AG04450 (cell line): ENCODE measurements at regions of chr3 and their contacts with region 1.

Region 1: DNA sequence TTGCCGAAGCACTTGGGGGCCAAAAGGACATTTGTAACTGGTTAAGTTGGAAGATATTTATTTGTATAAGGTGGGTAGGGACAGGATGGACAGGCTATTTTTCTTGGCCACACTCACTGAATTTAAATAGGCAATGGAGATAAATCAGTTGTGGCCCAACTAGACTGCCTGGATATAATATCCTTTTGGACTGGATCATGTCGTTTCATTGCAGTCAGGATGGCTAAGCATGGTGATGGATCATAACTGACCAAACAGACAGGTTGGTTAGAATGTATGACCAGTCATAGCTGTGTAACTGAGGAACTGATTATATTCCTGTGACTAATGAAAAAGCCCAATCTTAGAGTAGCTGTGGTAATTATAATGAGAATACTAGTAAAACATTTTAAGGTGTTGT is 284.0 kb downstream of the LPP start:
- DNase-seq: no peak
- H3K4me3 ChIP-seq: no peak overlapping the region
- H3K27ac ChIP-seq: no peak overlapping the region
- H3K27me3 ChIP-seq: no peaks in the 10 kb centered on the region
- CTCF ChIP-seq: no peak

Region 2: GRCh38 chr3:187858711-187859110 is 579.2 kb before region 1 on chr3:
- CTCF ChIA-PET with region 1: no interaction called
- POLR2A ChIA-PET with region 1: interaction called, 10 read pairs
- DNase-seq: no peak
- H3K4me3 ChIP-seq: no peak overlapping the region
- H3K27ac ChIP-seq: no peak overlapping the region
- H3K27me3 ChIP-seq: no peaks in the 10 kb centered on the region
- CTCF ChIP-seq: no peak